ENCODE measurements at regions of chr13 and their contacts with region 1.

Region 1: GRCh38 chr13:49690992-49691886 is at the start of gene EBPL:
- DNase-seq: peak; percentile 81
- H3K4me3 Mint-ChIP-seq: peak within 1 kb of the TSS; percentile 94
- H3K27ac Mint-ChIP-seq: peak within 1 kb of the TSS; percentile 67
- H3K4me1 Mint-ChIP-seq: peaks cover 30% of the 10 kb centered on the region
- H3K27me3 Mint-ChIP-seq: no peaks in the 10 kb centered on the region
- total RNA-seq, gene EBPL: 42.7 and 47.5 TPM in 2 replicates

Region 2: DNA sequence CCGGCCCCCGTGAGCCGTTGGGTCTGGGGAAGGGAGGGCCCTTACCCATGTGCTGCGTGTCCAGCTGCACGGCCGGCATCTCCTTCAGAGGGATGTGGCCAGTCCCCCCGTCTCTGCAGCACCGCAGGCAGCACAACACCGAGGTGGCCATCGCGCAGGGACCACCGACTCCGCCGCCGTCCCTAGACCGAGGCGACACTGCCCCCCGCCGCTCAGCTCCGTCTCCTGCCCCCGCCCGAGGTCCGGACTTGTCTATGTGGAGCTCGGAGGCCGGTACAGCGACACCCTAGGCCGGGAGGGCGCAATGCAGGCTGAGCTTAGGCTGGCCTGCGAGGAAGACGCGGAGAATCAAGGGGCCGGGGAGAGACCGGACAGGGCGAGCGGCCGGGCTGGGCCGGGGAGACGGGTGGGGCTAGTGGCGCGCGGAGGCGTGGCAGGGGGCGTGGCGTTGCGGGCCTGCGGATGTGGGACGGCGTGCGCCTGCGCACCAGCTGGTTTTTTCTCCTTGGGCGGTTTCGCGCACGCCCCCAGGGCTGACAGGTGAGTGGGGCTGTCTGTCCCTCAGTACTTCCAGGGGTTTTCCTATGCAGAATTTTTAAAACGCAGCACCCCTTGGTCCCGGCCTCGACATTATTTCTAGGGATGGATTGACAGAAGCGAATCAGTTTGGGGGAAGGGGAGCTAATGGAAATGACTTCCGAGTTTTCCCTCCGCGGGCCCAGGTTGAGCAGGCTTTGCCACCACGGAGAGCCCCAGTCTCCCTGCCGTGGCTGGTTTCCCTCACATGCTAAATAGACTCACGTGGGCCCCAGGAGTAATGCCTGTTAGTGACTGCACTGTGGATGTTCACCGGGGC is 245.1 kb after region 1 on chr13 and contains the start of gene SPRYD7:
- intact Hi-C with region 1: loop called (anchors 1 kb)
- DNase-seq: peak; percentile 92
- H3K4me3 Mint-ChIP-seq: peak within 1 kb of the TSS; percentile 85
- H3K27ac Mint-ChIP-seq: peak within 1 kb of the TSS; percentile 84
- H3K4me1 Mint-ChIP-seq: peaks cover 9% of the 10 kb centered on the region
- H3K27me3 Mint-ChIP-seq: peaks cover 4% of the 10 kb centered on the region
- total RNA-seq, gene SPRYD7: 8.7 and 9.8 TPM in 2 replicates

Measured in activated T-helper 2 cell treated with anti-CD3 and anti-CD28 coated beads, Interferon-gamma antibody, Interleukin-2, Interleukin-4, amounts not matched to agents 10 μg/mL and 5 μg/mL and 100 μg/mL, durations not matched to agents 14 hours and 24 hours and 36 hours (primary cell).